ENCODE measurements at regions of chr11 and their contacts with region 1.

Region 1: GRCh38 chr11:121655537-121656327 is 203.0 kb upstream of the SORL1-AS1 start:
- DNase-seq: peak; percentile 85 to 98 (median 90)

Region 2: GRCh38 chr11:121300313-121300971 is 355.3 kb before region 1 on chr11:
- intact Hi-C with region 1: no loop called
- DNase-seq: no peak

Region 3: DNA sequence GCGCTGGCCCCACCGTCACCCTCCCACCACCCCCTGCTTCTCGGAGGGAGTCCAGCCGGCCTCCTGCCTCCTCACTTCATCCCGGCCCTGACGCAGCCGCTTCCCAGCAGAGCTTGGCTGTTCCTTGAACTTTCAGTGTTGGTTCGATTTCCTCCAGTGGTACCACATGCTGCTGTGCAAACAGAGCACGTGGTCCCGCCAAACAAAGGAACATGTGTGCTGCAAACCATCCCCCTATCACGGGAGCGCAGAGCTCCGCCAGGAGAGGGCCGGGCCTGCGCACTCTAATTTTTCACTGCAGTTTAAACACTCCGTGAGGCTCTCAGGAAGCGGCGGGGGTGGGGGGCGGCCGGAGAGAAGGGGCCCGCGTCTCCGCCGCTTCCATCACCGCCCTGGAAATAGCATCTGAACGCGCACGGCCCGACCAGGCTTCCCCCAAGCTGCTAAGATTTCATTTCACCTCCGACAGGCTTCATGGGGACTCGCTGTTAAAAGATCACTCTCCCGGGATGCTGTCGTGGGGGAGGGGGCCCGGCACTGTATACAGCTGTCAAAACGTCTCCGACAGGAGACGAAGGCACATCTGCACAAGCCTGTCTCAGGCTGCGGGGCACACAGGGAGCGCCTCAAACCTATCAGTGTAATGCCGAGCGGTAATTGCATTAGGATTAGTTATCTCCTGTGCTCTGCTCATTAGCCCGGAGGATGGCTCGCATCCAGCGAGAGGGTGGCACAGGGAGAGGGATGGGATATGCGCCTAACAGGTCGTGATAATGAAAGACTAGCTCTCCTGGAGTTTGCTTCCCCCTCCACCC is 66.9 kb after region 1 on chr11:
- intact Hi-C with region 1: loop called (anchors 1 kb)
- DNase-seq: peak; percentile 88 to 98 (median 93)

Region 4: DNA sequence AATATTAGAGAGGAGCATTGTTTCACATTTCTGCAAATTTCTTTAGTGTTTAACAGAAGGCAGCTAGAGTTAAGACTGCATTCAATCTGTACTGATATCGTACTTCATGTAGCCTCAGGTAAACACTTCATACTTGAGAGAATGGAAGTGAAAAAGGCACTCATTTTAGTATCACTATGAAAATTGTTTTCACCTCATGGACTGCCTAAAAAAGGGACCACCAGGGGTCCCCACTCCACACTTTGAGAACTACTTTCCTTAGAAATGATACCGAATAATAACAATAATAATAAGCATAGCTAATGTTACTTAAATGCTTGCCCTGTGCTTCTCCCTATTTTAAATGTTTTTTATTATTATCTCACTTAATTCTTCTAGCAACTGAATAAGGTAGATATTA is 365.2 kb after region 1 on chr11:
- intact Hi-C with region 1: loop called (anchors 5 kb)
- DNase-seq: peak in 1 of 10 donors; percentile 18

Region 5: GRCh38 chr11:122101625-122102291 is 446.0 kb after region 1 on chr11:
- intact Hi-C with region 1: loop called (anchors 1 kb)
- DNase-seq: peak; percentile 64 to 96 (median 78)

Region 6: GRCh38 chr11:122202951-122203456 is 547.3 kb after region 1 on chr11:
- intact Hi-C with region 1: loop called (anchors 1 kb)
- DNase-seq: peak; percentile 64 to 97 (median 79)

Region 7: GRCh38 chr11:122293296-122294023 is 637.7 kb after region 1 on chr11:
- intact Hi-C with region 1: loop called (anchors 10 kb)
- DNase-seq: peak in 1 of 10 donors; percentile 24

Region 8: DNA sequence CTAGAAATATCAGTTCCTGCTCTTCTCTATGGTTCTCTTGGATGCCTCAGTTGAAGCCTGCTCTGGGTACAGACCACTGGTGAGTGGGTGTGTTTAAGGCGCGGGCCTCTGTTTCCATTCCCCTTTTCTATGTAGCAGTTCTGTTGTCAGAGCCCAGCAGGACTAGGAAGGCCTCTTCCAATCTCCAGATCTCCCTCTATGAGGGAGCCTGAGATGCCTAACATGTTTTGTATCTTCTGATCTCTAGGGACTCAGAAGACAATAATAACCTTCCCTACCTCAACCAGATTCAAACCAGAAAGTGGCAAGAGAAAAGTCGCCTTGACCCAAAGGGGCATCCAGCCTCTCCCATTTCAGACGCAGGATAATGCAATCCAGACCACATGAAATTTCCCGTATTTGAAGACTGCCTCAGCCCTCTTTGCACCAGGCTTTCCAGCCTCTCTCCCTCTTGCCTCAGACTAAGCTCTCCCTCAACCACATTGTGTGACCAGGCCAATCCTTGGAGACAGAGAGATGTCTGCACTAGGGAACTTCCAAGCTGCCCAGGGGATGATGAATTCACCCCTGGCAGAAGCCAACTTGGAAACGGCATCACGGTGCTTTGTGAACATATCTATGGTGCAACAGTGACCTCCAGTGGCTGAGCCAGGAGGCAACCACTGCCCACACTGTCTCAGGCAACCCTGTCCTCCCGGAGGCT is 849.7 kb after region 1 on chr11:
- intact Hi-C with region 1: loop called (anchors 1 kb)
- DNase-seq: peak; percentile 74 to 98 (median 84)